IMR-90 (cell line): ENCODE measurements at regions of chr18 and their contacts with region 1.

Region 1: GRCh38 chr18:63578357-63578958 is 8.7 kb upstream of the SERPINB13 start:
- DNase-seq: peak; percentile 36
- ATAC-seq: peak; percentile 54; the same call in 1 of the 2 replicates
- H3K4me3 ChIP-seq: no peak overlapping the region
- H3K27ac ChIP-seq: no peak overlapping the region
- H3K4me1 ChIP-seq: no peaks in the 10 kb centered on the region
- H3K27me3 ChIP-seq: no peaks in the 10 kb centered on the region; the same call in 1 of the 2 replicates
- CTCF ChIP-seq: peak; percentile 68
- POLR2A ChIP-seq: no peak
- RAD21 ChIP-seq: peak; percentile 67

Region 2: DNA sequence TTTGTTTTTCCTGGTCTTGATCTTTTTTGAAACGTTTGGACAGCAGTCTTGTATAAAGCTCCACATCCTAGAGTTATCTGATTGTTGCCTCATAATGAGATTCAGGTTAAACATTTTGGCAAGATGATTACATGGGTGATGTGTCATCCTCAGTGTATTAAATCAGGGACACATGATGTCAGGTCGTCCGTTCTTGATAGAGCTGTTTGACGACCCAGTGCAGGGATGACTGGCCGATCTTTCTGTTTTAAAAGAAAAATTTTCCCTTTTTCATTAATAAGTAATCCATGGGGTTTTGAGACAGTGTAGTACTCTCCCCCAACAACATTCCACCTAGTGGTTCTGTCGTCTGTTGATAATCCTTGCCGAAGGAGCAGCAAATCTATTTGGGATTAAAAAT is 264.6 kb after region 1 on chr18:
- CTCF ChIA-PET with region 1: interaction called, 5 read pairs
- POLR2A ChIA-PET with region 1: no interaction called
- dilution Hi-C with region 1: no loop called
- in situ Hi-C with region 1: no loop called
- intact Hi-C with region 1: loop called (anchors 2 kb)
- DNase-seq: no peak
- ATAC-seq: no peak
- H3K4me3 ChIP-seq: no peak overlapping the region
- H3K27ac ChIP-seq: no peak overlapping the region
- H3K4me1 ChIP-seq: no peaks in the 10 kb centered on the region
- H3K27me3 ChIP-seq: no peaks in the 10 kb centered on the region
- CTCF ChIP-seq: no peak
- POLR2A ChIP-seq: no peak
- RAD21 ChIP-seq: no peak

Region 3: DNA sequence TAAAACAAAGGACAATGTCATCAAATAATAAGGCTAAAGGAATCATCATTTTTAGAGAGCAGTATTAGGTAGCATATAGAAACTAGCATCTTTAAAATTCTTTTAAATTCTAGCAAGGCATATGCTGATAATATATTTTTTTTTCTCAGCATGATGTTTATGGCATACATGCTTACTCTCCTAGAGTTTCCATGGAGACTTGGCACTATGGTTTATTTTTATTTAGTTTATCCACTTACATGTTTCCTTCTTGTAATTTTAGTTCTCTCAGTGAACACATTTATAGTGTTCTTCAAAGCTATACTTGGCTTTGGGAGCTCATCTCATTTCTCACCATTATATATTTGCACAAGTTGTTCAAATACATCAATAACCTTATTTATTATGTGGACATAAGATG is 984.2 kb after region 1 on chr18:
- CTCF ChIA-PET with region 1: no interaction called
- POLR2A ChIA-PET with region 1: no interaction called
- dilution Hi-C with region 1: no loop called
- in situ Hi-C with region 1: no loop called
- intact Hi-C with region 1: no loop called
- DNase-seq: no peak
- ATAC-seq: no peak
- H3K4me3 ChIP-seq: no peak overlapping the region
- H3K27ac ChIP-seq: no peak overlapping the region
- H3K4me1 ChIP-seq: no peaks in the 10 kb centered on the region
- H3K27me3 ChIP-seq: no peaks in the 10 kb centered on the region
- CTCF ChIP-seq: no peak
- POLR2A ChIP-seq: no peak
- RAD21 ChIP-seq: no peak